ENCODE measurements at regions of chr2 and their contacts with region 1.

Region 1: GRCh38 chr2:27281855-27282559 is at the start of gene TRIM54:
- DNase-seq: no peak
- ATAC-seq: peak; percentile 37; a peak in 3 of 6 replicates
- H3K4me3 ChIP-seq: no peak within 1 kb of the TSS
- H3K27ac ChIP-seq: peak within 1 kb of the TSS; percentile 38 to 75
- H3K4me1 ChIP-seq: peaks cover 26% of the 10 kb centered on the region
- CTCF ChIP-seq: no peak
- EP300 ChIP-seq: no peak
- POLR2A ChIP-seq: no peak
- RAD21 ChIP-seq: no peak
- polyA plus RNA-seq, gene TRIM54: 0.05 and 0.14 TPM in 2 replicates

Region 2: DNA sequence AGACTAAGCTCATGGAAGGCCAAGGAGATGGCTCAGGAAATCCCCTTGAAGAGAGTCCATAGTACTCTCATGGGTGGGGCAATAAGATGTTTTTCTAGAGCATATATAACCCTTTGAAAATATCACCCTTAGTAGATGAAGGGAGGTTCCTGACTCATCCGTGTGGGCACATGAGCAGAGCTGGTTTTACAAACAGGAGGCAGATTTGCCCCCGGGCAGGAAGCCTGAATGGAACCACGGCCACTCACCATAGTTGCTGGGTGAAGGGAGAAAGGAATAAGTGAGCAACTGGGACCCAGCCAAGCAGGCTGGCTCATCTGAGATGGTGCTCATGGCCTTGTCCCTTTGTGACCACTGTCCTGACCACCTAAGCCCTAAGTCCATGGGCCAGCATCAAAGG is 340.5 kb before region 1 on chr2:
- CTCF ChIA-PET with region 1: no interaction called
- POLR2A ChIA-PET with region 1: no interaction called
- DNase-seq: no peak
- ATAC-seq: no peak
- H3K4me3 ChIP-seq: no peak overlapping the region
- H3K27ac ChIP-seq: no peak overlapping the region
- H3K4me1 ChIP-seq: no peaks in the 10 kb centered on the region
- CTCF ChIP-seq: no peak
- EP300 ChIP-seq: no peak
- POLR2A ChIP-seq: no peak
- RAD21 ChIP-seq: no peak

Region 3: DNA sequence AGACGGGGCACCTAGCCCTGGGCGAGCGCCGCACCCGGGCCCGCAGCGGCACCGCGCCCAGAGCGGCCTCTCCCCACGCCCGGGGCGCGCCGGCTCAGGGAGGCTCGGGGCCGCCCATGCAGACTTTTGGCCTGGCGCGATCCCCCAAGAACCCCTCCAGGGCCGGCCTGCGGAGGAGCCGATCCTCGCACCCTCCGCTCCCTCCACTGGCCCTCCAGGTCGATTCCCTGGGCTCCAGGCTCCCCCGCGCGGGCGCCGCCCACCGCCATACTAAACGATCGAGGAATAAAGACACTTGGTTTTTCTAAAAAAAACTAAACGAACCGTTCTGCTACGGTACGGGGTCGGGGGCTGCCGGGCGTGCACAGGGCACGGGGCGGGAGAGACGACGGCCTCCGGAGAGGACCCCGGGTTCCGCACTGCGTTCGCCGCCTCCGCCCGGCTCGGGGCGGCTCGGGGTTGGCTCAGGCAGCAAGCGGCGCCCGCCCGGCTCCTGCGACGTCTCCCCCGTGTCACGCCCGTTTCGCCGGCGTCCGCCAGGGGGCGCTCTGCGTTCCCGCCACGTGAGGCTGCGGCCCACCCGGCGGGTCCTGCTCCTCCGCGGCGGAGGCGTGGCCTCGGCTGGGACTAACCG is 195.8 kb before region 1 on chr2:
- CTCF ChIA-PET with region 1: interaction called, 29 read pairs
- POLR2A ChIA-PET with region 1: no interaction called
- DNase-seq: peak; percentile 95 to 97
- ATAC-seq: peak; percentile 73 to 89
- H3K4me3 ChIP-seq: peak overlapping the region; percentile 70
- H3K27ac ChIP-seq: peak overlapping the region; percentile 90 to 91
- H3K4me1 ChIP-seq: peaks cover 17% of the 10 kb centered on the region
- CTCF ChIP-seq: peak; percentile 98
- EP300 ChIP-seq: no peak
- POLR2A ChIP-seq: peak; percentile 41; the same call in 1 of the 2 replicates
- RAD21 ChIP-seq: peak; percentile 31 to 63; a peak in 4 of 5 replicates

Region 4: GRCh38 chr2:27162151-27163121 is 119.6 kb before region 1 on chr2:
- CTCF ChIA-PET with region 1: interaction called, 12 read pairs
- POLR2A ChIA-PET with region 1: no interaction called
- DNase-seq: peak in 1 of 2 experiments; percentile 21
- ATAC-seq: peak in 1 of 2 experiments; percentile 59; a peak in 3 of 6 replicates
- H3K4me3 ChIP-seq: no peak overlapping the region
- H3K27ac ChIP-seq: 0 out of 6 replicates have a peak overlapping the region, but pooled peaks of 1 of the 2 experiments have one; percentile 2
- H3K4me1 ChIP-seq: no peaks in the 10 kb centered on the region
- CTCF ChIP-seq: no peak
- EP300 ChIP-seq: no peak
- POLR2A ChIP-seq: no peak
- RAD21 ChIP-seq: no peak

Region 5: GRCh38 chr2:27191053-27191829 is 90.8 kb before region 1 on chr2:
- CTCF ChIA-PET with region 1: interaction called, 12 read pairs
- POLR2A ChIA-PET with region 1: no interaction called
- DNase-seq: peak; percentile 60 to 74
- ATAC-seq: peak; percentile 96
- H3K4me3 ChIP-seq: no peak overlapping the region
- H3K27ac ChIP-seq: no peak overlapping the region
- H3K4me1 ChIP-seq: 0 out of 3 replicates have a peak, but pooled peaks cover 3% of the 10 kb centered on the region
- CTCF ChIP-seq: peak; percentile 79
- EP300 ChIP-seq: no peak
- POLR2A ChIP-seq: no peak
- RAD21 ChIP-seq: peak; percentile 79 to 83

Region 6: DNA sequence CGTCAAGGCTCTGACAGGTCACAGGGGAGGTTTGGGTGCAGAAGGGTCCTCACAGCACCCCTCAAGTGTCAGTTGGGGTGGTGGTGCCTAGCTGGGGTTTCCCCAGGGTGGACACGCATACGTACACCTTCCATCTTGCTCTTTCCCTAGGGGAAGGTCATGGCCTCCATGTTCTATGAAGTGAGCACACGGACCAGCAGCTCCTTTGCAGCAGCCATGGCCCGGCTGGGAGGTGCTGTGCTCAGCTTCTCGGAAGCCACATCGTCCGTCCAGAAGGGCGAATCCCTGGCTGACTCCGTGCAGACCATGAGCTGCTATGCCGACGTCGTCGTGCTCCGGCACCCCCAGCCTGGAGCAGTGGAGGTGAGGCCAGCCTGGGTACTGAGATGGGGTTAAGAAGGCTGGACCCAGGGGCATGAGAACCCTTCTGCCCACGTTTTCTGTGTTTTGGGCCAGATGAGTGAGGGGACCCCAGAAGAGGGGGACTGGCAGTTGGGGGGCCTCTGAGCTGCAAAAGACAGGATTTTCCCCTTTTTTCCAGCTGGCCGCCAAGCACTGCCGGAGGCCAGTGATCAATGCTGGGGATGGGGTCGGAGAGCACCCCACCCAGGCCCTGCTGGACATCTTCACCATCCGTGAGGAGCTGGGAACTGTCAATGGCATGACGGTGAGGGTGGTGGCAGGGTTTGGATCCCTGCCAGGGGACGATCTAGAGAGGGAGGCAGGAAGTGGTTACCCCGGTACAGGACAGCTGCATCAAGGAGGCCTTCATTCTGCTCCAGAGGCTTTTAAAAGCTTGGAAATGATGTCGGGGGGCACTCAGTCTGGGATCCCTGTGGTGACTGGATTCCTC is 40.0 kb before region 1 on chr2:
- CTCF ChIA-PET with region 1: interaction called, 205 read pairs
- POLR2A ChIA-PET with region 1: no interaction called
- DNase-seq: no peak
- ATAC-seq: no peak
- H3K4me3 ChIP-seq: no peak overlapping the region
- H3K27ac ChIP-seq: no peak overlapping the region
- H3K4me1 ChIP-seq: no peaks in the 10 kb centered on the region
- CTCF ChIP-seq: no peak
- EP300 ChIP-seq: no peak
- POLR2A ChIP-seq: no peak
- RAD21 ChIP-seq: no peak

Region 7: GRCh38 chr2:27303093-27304025 is 21.4 kb after region 1 on chr2:
- CTCF ChIA-PET with region 1: interaction called, 394 read pairs
- POLR2A ChIA-PET with region 1: interaction called, 4 read pairs
- DNase-seq: peak; percentile 80 to 86
- ATAC-seq: peak; percentile 47 to 85; a peak in 4 of 6 replicates
- H3K4me3 ChIP-seq: peak overlapping the region; percentile 37
- H3K27ac ChIP-seq: peak overlapping the region; percentile 60 to 83
- H3K4me1 ChIP-seq: 0 out of 3 replicates have a peak, but pooled peaks cover 3% of the 10 kb centered on the region
- CTCF ChIP-seq: peak; percentile 97
- EP300 ChIP-seq: no peak
- POLR2A ChIP-seq: no peak
- RAD21 ChIP-seq: peak; percentile 92

Measured in A549 (cell line).